Ascending aorta (tissue), 2 donors: ENCODE measurements at regions of chr2 and their contacts with region 1.

Region 1: DNA sequence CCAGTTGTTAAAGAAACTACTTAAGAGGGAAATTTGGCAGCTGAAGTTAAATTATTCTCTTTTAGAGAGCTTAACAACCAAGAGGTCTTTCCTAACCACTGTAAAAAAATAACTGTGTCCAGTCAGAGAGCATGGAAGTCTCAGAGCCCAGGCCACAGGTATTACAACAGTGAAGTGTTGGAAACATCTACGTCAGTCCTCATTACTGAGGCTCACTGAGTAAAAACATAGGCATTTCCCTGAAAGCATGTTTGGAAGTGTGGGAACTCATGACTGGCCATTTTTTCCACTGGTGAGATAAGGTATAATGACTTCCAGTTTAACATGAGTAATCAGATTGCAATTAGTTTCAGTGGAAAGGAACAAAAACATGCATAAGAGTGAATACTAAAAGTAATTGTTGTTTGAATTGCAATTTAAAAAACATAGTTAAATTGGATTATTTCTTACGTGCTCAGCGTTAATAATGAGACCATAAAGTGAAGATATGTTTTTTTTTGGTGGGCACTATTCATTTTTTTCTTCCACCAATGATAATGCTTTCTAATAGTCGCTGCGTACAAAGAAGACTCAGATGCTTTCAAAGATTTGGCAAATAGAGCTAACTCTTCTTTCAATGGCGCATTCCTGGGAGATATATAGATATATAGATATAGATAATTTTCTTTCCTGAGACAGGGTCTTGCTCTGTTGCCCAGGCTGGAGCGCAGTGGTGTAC is 60.8 kb downstream of the EFEMP1 start:
- DNase-seq: peak; percentile 47 to 91
- H3K4me3 ChIP-seq: no peak overlapping the region
- H3K27ac ChIP-seq: peak overlapping the region; percentile 86 to 91
- H3K4me1 ChIP-seq: peaks cover 26 to 42% of the 10 kb centered on the region in 2 donors
- H3K27me3 ChIP-seq: no peaks in the 10 kb centered on the region
- CTCF ChIP-seq: no peak

Region 2: DNA sequence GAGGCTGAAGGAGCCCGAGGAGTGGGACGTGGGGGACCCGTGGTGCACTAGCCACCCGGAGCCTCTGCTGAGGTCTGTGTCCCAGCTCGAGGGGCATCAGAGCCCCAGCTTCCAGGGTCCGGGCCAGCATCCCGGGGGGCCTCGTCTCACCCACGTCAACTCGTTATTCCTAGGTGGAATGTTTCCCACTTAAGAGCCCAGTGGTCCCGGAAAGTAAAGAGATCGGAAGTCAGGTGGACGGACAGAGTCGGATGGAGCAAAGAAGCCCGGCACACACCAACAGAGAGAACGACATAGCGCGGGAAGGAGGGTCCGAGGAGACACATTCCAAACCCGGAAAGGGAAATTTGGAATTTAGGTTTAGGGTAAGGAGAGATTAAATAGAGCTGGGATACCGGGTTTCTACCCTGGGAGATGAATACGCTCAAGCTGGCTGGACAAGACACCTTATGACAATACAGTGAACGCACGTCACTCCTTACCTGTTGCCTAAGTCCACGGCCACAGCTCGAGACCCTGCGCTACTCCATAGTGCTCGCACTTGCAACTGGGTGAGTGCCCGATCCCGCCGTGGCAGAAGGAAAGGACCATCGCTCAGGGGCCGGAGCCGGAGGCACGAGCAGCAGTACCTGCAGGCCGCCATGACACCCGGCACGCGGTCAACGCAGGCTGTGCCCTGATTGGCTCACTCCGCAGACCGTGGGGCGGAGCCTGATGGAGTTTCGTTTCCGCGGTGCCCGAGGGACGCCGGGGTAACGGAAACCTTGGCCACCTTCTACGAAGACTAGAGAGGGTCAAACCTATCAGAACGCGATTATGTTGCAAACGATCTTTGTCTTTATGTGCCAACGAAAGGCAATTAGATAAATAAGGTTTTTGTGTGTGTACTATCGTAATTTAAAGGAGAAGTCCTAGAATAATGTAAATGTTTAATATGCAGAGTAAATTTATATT is 169.4 kb before region 1 on chr2 and contains the start of gene PNPT1:
- intact Hi-C with region 1: no loop called
- DNase-seq: peak; percentile 65 to 95
- H3K4me3 ChIP-seq: peak within 1 kb of the TSS; percentile 67 to 91
- H3K27ac ChIP-seq: peak within 1 kb of the TSS; percentile 24 to 45
- H3K4me1 ChIP-seq: no peaks in the 10 kb centered on the region
- H3K27me3 ChIP-seq: no peaks in the 10 kb centered on the region
- CTCF ChIP-seq: no peak
- total RNA-seq, gene PNPT1: 4.2 TPM

Region 3: DNA sequence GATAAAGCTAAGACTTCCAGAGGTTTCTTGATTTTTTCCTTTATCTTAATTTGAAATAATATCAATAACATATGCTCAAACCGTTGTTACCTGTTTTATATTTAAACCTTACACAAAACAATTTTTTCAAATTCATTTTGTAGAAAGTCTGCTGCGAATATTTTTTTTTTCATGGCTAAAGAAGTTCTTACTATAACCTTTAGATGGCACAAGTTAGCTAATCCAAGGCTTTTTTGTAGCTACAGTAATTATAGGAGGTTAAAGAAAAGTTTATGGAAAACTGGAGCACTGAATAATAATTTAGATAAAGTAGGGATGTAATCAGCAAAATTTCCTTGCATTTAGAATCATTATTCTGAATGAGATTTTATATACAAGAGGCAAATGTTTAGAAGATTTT is 91.2 kb before region 1 on chr2:
- intact Hi-C with region 1: loop called (anchors 5 kb)
- DNase-seq: no peak
- H3K4me3 ChIP-seq: no peak overlapping the region
- H3K27ac ChIP-seq: no peak overlapping the region
- H3K4me1 ChIP-seq: peaks cover 0 to 3% of the 10 kb centered on the region in 2 donors
- H3K27me3 ChIP-seq: no peaks in the 10 kb centered on the region
- CTCF ChIP-seq: peak; percentile 45 to 87 (median 77)

Region 4: GRCh38 chr2:55885129-55885943 is 22.5 kb after region 1 on chr2:
- intact Hi-C with region 1: loop called (anchors 1 kb)
- DNase-seq: peak in 1 of 2 donors; percentile 73
- H3K4me3 ChIP-seq: no peak overlapping the region
- H3K27ac ChIP-seq: peak overlapping the region; percentile 89 to 93
- H3K4me1 ChIP-seq: peaks cover 15 to 65% of the 10 kb centered on the region in 2 donors
- H3K27me3 ChIP-seq: no peaks in the 10 kb centered on the region
- CTCF ChIP-seq: no peak

Region 5: DNA sequence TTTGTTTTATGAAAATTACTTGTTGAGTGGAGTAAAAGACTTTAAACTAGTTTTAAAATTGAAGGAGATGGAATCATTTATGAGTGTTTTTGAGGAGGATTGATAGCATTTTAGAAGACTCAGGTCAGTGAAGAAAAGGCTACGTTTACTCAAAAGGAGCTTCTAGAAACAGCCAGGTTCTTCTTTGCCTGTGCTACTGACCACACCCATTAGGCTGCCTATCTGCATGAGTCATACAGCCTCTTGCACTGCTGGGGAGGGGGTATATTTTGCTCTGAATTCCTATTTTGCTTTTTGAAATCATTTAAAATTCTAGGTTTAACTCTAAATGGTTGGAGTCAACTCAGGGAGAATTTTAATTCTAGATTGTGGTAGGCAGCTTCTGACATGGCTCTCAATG is 38.5 kb after region 1 on chr2:
- intact Hi-C with region 1: no loop called
- DNase-seq: no peak
- H3K4me3 ChIP-seq: no peak overlapping the region
- H3K27ac ChIP-seq: peak overlapping the region; percentile 25 to 66
- H3K4me1 ChIP-seq: peaks cover 5 to 12% of the 10 kb centered on the region in 2 donors
- H3K27me3 ChIP-seq: no peaks in the 10 kb centered on the region
- CTCF ChIP-seq: no peak

Region 6: DNA sequence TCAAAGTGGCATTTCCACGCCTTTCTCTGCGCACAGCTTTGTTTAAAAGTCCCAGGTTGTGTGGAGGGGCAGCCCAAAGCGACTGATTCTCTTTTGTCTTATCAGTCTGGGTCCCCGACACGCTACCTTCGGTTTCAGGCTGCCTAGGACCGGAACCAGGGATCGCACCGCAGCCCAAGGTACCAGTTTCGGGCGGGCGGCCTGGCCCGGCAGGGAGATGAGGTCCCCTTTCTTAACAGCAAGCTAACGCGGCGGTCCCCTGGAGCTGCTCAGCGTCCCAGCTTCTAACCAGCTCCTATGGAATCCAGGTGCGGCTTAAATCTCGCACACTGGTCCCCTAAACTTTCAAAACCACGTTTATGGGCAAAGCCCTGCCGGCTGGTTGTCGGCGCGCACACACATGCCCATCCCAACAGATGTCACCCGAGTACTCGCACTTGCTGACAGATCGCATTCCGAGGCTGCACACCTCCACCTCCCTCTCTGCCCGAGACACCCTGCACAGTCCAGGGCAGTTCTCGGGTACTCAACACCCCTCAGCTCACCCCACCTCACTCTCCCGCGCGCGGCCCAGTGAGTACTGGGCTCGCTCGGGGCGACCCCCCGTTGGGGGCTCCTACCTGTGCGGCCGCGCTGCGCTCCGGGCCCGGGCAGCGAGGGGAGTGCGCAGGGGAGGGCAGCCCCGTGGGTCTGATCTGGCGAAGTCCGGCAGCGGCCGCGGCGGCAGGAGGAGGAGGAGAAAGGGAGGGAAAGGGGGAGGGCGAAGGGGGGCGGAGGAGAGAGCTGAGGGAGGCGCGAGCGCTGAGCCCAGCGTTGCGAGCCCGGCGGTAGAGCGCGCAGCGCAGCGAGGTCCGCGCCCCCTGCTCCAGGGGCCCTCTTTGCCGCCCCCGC is 60.5 kb after region 1 on chr2 and contains the start of gene EFEMP1:
- intact Hi-C with region 1: loop called (anchors 2 kb)
- DNase-seq: peak in 1 of 2 donors; percentile 87
- H3K4me3 ChIP-seq: peak within 1 kb of the TSS; percentile 66 to 83
- H3K27ac ChIP-seq: peak within 1 kb of the TSS; percentile 74 to 80
- H3K4me1 ChIP-seq: peaks cover 0 to 6% of the 10 kb centered on the region in 2 donors
- H3K27me3 ChIP-seq: no peaks in the 10 kb centered on the region
- CTCF ChIP-seq: no peak
- total RNA-seq, gene EFEMP1: 1,320 TPM

Region 7: DNA sequence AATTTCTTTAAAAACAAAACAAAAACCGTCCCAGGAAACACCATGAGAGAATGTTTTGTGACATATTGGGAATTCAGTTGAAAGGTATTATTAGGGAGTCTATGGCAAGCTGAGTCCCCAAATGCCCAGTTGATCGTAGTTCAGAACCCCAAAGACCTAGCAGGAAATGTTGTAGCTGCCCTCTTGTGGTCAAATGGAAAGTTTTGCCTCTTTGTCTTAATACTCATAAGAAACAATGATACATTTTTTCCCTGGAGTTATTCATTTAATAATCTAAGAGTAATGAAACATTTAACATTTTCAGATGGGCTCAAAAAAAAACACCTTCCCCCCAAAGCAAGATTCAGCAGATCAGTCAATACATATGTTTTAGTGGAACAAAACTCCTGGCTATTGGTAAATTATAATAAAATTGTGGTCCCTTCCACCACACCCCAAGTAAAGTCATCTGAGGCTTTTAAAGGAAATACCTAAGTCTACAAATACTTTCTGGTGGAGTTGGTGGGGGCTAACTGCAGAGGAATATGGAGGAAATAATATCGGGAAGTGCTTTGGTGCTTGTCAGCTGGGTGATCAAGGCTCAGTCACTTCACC is 98.6 kb after region 1 on chr2:
- intact Hi-C with region 1: loop called (anchors 5 kb)
- DNase-seq: no peak
- H3K4me3 ChIP-seq: no peak overlapping the region
- H3K27ac ChIP-seq: no peak overlapping the region
- H3K4me1 ChIP-seq: peaks cover 7 to 8% of the 10 kb centered on the region in 2 donors
- H3K27me3 ChIP-seq: no peaks in the 10 kb centered on the region
- CTCF ChIP-seq: peak; percentile 37 to 72 (median 61)

Region 8: GRCh38 chr2:55992465-55992864 is 129.6 kb after region 1 on chr2:
- intact Hi-C with region 1: loop called (anchors 2 kb)
- DNase-seq: peak; percentile 14 to 88
- H3K4me3 ChIP-seq: no peak overlapping the region
- H3K27ac ChIP-seq: peak overlapping the region; percentile 62 to 65
- H3K4me1 ChIP-seq: peaks cover 0 to 15% of the 10 kb centered on the region in 2 donors
- H3K27me3 ChIP-seq: no peaks in the 10 kb centered on the region
- CTCF ChIP-seq: no peak